ENCODE measurements at regions of chr5 and their contacts with region 1.

Region 1: GRCh38 chr5:99948850-99949249 is 586.3 kb upstream of the FAM174A start:
- DNase-seq: no peak
- CTCF ChIP-seq: no peak

Region 2: DNA sequence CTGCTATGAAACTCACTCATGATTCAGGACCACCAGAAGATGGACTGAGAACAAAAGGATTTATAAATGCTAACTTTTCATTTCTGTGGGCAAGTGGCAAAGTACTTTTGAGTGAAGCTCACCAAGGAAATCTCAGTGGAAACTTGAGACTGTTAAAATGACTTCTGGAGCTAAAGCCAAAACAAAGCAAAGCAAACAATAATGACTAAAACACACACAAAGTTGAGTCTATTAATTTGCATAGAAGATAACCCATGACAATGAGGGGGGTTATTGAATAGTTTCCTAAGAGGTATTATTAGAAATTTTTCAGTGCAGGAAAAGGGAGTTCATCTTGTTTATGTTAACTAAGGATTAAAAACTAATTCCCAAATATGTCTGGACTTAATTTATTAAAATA is 26.5 kb before region 1 on chr5:
- CTCF ChIA-PET with region 1: no interaction called
- POLR2A ChIA-PET with region 1: no interaction called
- DNase-seq: no peak
- CTCF ChIP-seq: no peak

Region 3: GRCh38 chr5:99973779-99974178 is 24.9 kb after region 1 on chr5:
- CTCF ChIA-PET with region 1: interaction called, 13 read pairs
- POLR2A ChIA-PET with region 1: no interaction called
- DNase-seq: no peak
- CTCF ChIP-seq: no peak

Measured in GM10248 (cell line).